ENCODE measurements at regions of chr16 and their contacts with region 1.

Region 1: GRCh38 chr16:87636072-87636684 is 33.9 kb downstream of the JPH3 start:
- DNase-seq: peak; percentile 65 to 89
- ATAC-seq: peak; percentile 77 to 90 (median 87)
- H3K4me3 ChIP-seq: peak overlapping the region; percentile 35
- H3K4me3 Mint-ChIP-seq: peak overlapping the region; percentile 85
- H3K27ac ChIP-seq: peak overlapping the region; percentile 58
- H3K27ac Mint-ChIP-seq: peak overlapping the region; percentile 26 to 58
- H3K4me1 ChIP-seq: peaks cover 21% of the 10 kb centered on the region
- H3K4me1 Mint-ChIP-seq: peaks cover 0 to 26% of the 10 kb centered on the region in 2 donors
- H3K27me3 ChIP-seq: no peaks in the 10 kb centered on the region
- H3K27me3 Mint-ChIP-seq: peaks cover 9 to 14% of the 10 kb centered on the region in 2 donors
- CTCF ChIP-seq: peak; percentile 47

Region 2: DNA sequence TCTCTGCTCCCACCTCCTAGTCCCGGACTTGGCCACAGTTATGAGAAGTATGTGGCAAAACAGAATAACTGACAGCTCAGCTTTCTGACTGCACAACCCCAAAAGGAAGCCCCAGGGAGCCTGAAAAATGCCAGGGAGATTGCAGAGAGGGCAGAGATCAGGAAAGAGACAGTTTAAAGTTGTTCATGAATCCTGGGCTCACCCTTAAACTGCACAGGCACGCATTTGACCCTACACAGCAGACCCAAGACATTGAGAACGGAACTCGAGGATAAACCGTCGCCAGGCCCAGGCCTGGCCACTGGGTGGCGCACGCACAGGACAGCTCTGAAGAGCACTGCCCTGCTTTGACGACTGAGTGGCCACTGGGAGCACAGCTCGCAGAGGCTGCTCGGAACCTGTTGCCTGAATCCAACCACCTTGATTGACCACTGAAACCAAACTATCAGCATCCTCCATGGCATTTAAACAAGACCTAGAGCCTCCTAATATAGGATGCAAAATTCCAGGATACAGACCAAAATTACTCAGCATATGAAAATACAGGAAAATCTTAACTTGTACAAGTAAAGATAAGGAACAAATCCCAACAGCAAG is 433.0 kb before region 1 on chr16:
- intact Hi-C with region 1: loop called (anchors 5 kb)
- DNase-seq: peak; percentile 53 to 54
- ATAC-seq: peak; percentile 62 to 95 (median 68)
- H3K4me3 ChIP-seq: no peak overlapping the region
- H3K4me3 Mint-ChIP-seq: no peak overlapping the region
- H3K27ac ChIP-seq: no peak overlapping the region
- H3K27ac Mint-ChIP-seq: no peak overlapping the region
- H3K4me1 ChIP-seq: peaks cover 4% of the 10 kb centered on the region
- H3K4me1 Mint-ChIP-seq: peaks cover 10 to 14% of the 10 kb centered on the region in 2 donors
- H3K27me3 ChIP-seq: peaks cover 2% of the 10 kb centered on the region
- H3K27me3 Mint-ChIP-seq: peaks cover 9 to 15% of the 10 kb centered on the region in 2 donors
- CTCF ChIP-seq: peak; percentile 76

Region 3: GRCh38 chr16:87316923-87317749 is 319.0 kb before region 1 on chr16 and contains the start of gene C16orf95:
- intact Hi-C with region 1: loop called (anchors 5 kb)
- DNase-seq: peak; percentile 97
- ATAC-seq: peak; percentile 89 to 94 (median 92)
- H3K4me3 ChIP-seq: peak within 1 kb of the TSS; percentile 95
- H3K4me3 Mint-ChIP-seq: peak within 1 kb of the TSS; percentile 97
- H3K27ac ChIP-seq: peak within 1 kb of the TSS; percentile 76
- H3K27ac Mint-ChIP-seq: peak within 1 kb of the TSS; percentile 91 to 97
- H3K4me1 ChIP-seq: peaks cover 13% of the 10 kb centered on the region
- H3K4me1 Mint-ChIP-seq: peaks cover 18 to 20% of the 10 kb centered on the region in 2 donors
- H3K27me3 ChIP-seq: no peaks in the 10 kb centered on the region
- H3K27me3 Mint-ChIP-seq: no peaks in the 10 kb centered on the region
- CTCF ChIP-seq: peak; percentile 38
- total RNA-seq, gene C16orf95: 1.6 to 4.1 (median 2.7) TPM

Region 4: GRCh38 chr16:87416826-87417527 is 219.2 kb before region 1 on chr16:
- intact Hi-C with region 1: loop called (anchors 2 kb)
- DNase-seq: peak in 1 of 2 donors; percentile 61
- ATAC-seq: no peak
- H3K4me3 ChIP-seq: no peak overlapping the region
- H3K4me3 Mint-ChIP-seq: no peak overlapping the region
- H3K27ac ChIP-seq: no peak overlapping the region
- H3K27ac Mint-ChIP-seq: no peak overlapping the region
- H3K4me1 ChIP-seq: no peaks in the 10 kb centered on the region
- H3K4me1 Mint-ChIP-seq: no peaks in the 10 kb centered on the region
- H3K27me3 ChIP-seq: no peaks in the 10 kb centered on the region
- H3K27me3 Mint-ChIP-seq: no peaks in the 10 kb centered on the region
- CTCF ChIP-seq: peak; percentile 49